Mammary epithelial cell (primary cell): ENCODE measurements at regions of chr19 and their contacts with region 1.

Region 1: GRCh38 chr19:37906869-37907734 is at the start of gene SIPA1L3:
- DNase-seq: peak; percentile 95
- H3K4me3 ChIP-seq: peak within 1 kb of the TSS; percentile 61 to 94 (median 84)
- H3K27ac ChIP-seq: peak within 1 kb of the TSS; percentile 44
- H3K4me1 ChIP-seq: peaks cover 15% of the 10 kb centered on the region
- H3K27me3 ChIP-seq: no peaks in the 10 kb centered on the region
- CTCF ChIP-seq: no peak
- total RNA-seq, gene SIPA1L3: 29.3 to 38.5 TPM

Region 2: GRCh38 chr19:37738371-37738770 is 168.7 kb before region 1 on chr19:
- CTCF ChIA-PET with region 1: no interaction called
- dilution Hi-C with region 1: no loop called
- in situ Hi-C with region 1: no loop called
- intact Hi-C with region 1: no loop called
- DNase-seq: no peak
- H3K4me3 ChIP-seq: no peak overlapping the region
- H3K27ac ChIP-seq: no peak overlapping the region
- H3K4me1 ChIP-seq: no peaks in the 10 kb centered on the region
- H3K27me3 ChIP-seq: no peaks in the 10 kb centered on the region
- CTCF ChIP-seq: no peak

Region 3: GRCh38 chr19:37979547-37980082 is 72.5 kb after region 1 on chr19:
- CTCF ChIA-PET with region 1: interaction called, 3 read pairs
- dilution Hi-C with region 1: no loop called
- in situ Hi-C with region 1: loop called in 1 of 2 experiments (anchors 10 kb)
- intact Hi-C with region 1: loop called (anchors 1 kb)
- DNase-seq: peak; percentile 98
- H3K4me3 ChIP-seq: no peak overlapping the region
- H3K27ac ChIP-seq: peak overlapping the region; percentile 95
- H3K4me1 ChIP-seq: peaks cover 67% of the 10 kb centered on the region
- H3K27me3 ChIP-seq: no peaks in the 10 kb centered on the region
- CTCF ChIP-seq: no peak

Region 4: GRCh38 chr19:38004521-38005223 is 97.6 kb after region 1 on chr19:
- CTCF ChIA-PET with region 1: interaction called, 12 read pairs
- dilution Hi-C with region 1: no loop called
- in situ Hi-C with region 1: loop called in 1 of 2 experiments (anchors 5 kb)
- intact Hi-C with region 1: no loop called
- DNase-seq: peak; percentile 95
- H3K4me3 ChIP-seq: peak overlapping the region; percentile 24 to 44 (median 38)
- H3K27ac ChIP-seq: peak overlapping the region; percentile 94
- H3K4me1 ChIP-seq: peaks cover 36% of the 10 kb centered on the region
- H3K27me3 ChIP-seq: no peaks in the 10 kb centered on the region
- CTCF ChIP-seq: no peak

Region 5: GRCh38 chr19:38095411-38096308 is 188.6 kb after region 1 on chr19:
- CTCF ChIA-PET with region 1: no interaction called
- dilution Hi-C with region 1: no loop called
- in situ Hi-C with region 1: loop called (anchors 5 to 10 kb)
- intact Hi-C with region 1: loop called (anchors 1 kb)
- DNase-seq: peak; percentile 44
- H3K4me3 ChIP-seq: no peak overlapping the region
- H3K27ac ChIP-seq: no peak overlapping the region
- H3K4me1 ChIP-seq: no peaks in the 10 kb centered on the region
- H3K27me3 ChIP-seq: no peaks in the 10 kb centered on the region
- CTCF ChIP-seq: peak; percentile 84 to 86

Region 6: DNA sequence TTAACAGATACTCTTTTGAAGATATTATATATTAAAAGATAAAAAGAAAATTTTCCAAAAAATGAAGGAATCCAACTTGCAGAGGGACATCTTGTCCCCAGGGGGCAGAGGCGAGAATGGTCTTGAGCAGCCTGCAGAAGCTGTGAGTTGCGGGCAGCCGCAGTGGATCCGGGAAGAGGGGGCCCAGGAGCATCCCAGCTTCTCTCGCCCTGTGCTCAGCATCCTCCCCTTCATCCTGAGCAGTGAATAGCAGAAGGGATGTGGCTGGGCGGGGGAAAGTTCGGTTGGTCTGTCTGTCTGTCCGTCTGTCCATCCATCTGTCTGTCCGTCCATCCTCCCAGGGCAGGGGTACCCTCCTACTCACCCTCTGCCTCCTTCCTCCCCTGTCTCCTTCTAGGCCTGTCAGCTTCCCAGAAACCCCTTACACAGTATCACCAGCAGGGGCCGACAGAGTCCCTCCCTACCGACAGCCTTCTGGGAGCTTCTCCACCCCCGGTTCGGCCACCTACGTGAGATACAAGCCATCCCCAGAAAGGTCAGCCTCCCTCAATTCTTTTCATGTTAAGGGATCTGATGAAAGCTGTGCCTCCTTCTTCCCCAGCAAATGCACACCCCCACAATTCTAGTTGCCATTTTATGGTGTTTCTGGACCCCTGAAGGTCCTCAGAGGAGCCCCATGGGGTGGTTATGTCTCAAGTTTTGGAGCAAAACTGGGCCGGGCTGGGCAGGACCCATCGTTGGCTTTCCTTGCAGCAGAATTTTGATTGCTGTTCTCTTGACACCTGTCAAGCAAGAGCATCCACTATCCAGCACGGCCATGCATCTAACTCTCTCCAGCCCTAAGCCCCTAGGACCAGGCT is 235.3 kb after region 1 on chr19:
- CTCF ChIA-PET with region 1: interaction called, 5 read pairs
- dilution Hi-C with region 1: no loop called
- in situ Hi-C with region 1: no loop called
- intact Hi-C with region 1: loop called (anchors 1 kb)
- DNase-seq: peak; percentile 32
- H3K4me3 ChIP-seq: no peak overlapping the region
- H3K27ac ChIP-seq: no peak overlapping the region
- H3K4me1 ChIP-seq: no peaks in the 10 kb centered on the region
- H3K27me3 ChIP-seq: no peaks in the 10 kb centered on the region
- CTCF ChIP-seq: peak; percentile 83 to 90

Region 7: DNA sequence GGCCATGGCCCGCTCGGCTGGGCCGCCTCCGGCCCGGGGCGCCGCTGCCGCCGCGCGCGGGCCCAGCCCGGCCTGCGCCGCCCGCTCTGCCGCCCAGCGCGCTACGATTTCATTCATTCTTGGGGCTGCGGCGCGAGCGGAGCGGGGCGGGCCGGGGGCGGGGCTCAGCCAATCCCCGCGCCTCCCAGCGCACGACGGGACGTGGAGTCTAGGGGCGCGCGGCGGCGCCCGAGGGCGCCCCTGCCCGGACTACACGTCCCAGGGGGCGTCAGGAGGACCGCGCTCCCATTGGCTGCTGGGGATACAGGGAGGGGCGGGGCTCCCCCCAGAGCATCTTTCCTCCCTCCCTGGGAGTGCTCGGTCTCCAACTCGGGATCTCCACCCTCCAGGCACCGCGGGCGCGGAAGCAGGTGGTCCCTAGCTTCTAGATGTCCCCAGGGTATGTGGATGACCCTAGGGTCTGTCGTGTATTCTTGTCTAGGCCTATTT is 322.5 kb after region 1 on chr19:
- CTCF ChIA-PET with region 1: no interaction called
- dilution Hi-C with region 1: no loop called
- in situ Hi-C with region 1: loop called in 1 of 2 experiments (anchors 10 kb)
- intact Hi-C with region 1: loop called (anchors 1 kb)
- DNase-seq: peak; percentile 79
- H3K4me3 ChIP-seq: no peak overlapping the region
- H3K27ac ChIP-seq: no peak overlapping the region
- H3K4me1 ChIP-seq: peaks cover 14% of the 10 kb centered on the region
- H3K27me3 ChIP-seq: peaks cover 12% of the 10 kb centered on the region
- CTCF ChIP-seq: no peak